Activated CD4-positive, alpha-beta T cell treated with anti-CD3 and anti-CD28 coated beads, Interleukin-2, amount 10 ng/mL, durations not matched to agents 24 days and 14 days (primary cell): ENCODE measurements at regions of chr3 and their contacts with region 1.

Region 1: DNA sequence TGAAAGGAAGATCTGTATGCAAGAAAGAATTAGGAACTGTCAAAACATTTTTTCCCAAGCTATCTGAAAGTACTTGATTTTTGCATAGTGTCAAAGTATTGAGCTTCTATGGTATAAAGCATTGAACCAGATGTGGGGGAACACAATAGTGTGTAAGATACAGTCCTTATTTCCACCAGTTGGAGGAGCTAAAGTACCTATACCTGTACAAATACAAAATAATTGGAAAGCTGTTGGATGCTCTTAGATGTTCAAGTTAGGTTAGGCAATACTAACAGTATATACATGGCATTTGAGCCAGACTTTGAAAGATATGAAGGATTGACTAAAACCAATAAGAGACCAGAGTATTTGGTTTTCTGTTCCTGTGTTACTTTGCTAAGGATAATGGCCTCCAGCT is 148.3 kb downstream of the B3GALNT1 start:
- DNase-seq: no peak
- H3K4me3 Mint-ChIP-seq: no peak overlapping the region
- H3K27ac Mint-ChIP-seq: no peak overlapping the region
- H3K4me1 Mint-ChIP-seq: no peaks in the 10 kb centered on the region
- H3K27me3 Mint-ChIP-seq: peaks cover 5% of the 10 kb centered on the region

Region 2: DNA sequence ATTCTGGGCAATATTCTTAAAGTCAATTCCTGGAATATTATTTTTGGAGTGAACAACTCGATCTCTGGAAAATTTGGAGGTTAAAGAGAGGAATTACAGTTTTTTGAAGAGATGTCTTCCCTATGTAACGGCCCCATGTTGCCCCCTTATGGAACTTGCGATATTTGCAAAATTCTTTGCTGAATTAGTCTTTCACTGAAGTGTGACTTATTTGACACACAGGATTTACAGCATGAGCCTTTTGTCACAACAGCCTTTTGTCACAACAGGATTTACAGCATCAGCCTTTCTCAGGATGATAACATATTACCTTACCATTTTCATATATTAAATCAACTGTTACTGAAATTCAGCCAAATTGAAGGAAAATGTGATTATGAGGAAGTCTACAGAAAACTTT is 452.3 kb after region 1 on chr3:
- intact Hi-C with region 1: loop called (anchors 5 kb)
- DNase-seq: peak; percentile 76
- H3K4me3 Mint-ChIP-seq: no peak overlapping the region
- H3K27ac Mint-ChIP-seq: no peak overlapping the region
- H3K4me1 Mint-ChIP-seq: peaks cover 3% of the 10 kb centered on the region
- H3K27me3 Mint-ChIP-seq: peaks cover 51% of the 10 kb centered on the region